Ovary (tissue), 10 donors: ENCODE measurements at regions of chr11 and their contacts with region 1.

Region 1: DNA sequence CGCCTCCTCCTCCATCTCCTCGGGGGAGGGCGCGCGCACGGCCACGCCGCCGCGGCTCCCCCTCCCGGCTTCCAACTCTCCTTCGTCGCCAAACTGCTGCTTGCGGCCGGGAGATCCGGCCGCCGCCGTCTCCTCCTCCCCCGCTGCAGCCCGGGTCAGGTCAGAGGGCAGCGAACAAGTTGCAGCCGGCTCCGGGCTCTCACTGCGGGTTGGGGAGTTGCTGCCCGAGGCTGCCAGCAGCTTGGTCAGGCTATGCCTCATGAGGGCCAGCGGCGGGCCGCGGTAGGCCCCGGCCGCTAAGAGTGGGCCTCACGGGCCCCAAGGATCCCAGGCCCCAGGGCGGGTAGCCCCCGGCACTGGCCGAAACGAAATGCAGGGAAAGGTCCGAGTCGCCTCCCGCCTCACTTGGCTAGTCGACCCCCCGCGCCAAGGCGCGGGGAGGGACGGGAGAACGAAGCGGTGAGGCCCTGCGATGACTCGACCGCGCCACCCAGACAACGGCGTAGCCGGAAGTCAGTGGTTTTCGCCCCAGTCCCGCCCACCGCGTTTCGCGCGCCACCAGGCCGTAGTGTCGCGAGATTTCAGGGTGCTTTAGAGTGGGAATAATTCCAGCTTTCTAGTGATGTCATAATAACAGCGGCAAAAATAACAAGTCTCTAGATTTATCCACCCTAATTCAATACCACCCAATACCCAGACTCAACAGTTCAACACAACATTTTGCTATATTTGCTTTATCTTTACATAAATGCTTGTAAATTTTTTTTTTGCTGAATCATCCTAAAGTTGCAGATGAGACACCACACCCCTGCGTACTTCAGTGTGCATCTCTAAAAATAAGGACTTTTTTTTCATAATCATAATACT is at the start of gene CREBZF:
- DNase-seq: peak; percentile 95 to 97 (median 96)
- H3K4me3 ChIP-seq: peak within 1 kb of the TSS; percentile 68
- H3K27ac ChIP-seq: peak within 1 kb of the TSS; percentile 76 to 98
- H3K4me1 ChIP-seq: peaks cover 2% of the 10 kb centered on the region
- H3K27me3 ChIP-seq: no peaks in the 10 kb centered on the region
- CTCF ChIP-seq: no peak
- EP300 ChIP-seq: no peak
- POLR2A ChIP-seq: peak; percentile 98
- total RNA-seq, gene CREBZF: 44.7 to 80.8 (median 55.7) TPM

Region 2: DNA sequence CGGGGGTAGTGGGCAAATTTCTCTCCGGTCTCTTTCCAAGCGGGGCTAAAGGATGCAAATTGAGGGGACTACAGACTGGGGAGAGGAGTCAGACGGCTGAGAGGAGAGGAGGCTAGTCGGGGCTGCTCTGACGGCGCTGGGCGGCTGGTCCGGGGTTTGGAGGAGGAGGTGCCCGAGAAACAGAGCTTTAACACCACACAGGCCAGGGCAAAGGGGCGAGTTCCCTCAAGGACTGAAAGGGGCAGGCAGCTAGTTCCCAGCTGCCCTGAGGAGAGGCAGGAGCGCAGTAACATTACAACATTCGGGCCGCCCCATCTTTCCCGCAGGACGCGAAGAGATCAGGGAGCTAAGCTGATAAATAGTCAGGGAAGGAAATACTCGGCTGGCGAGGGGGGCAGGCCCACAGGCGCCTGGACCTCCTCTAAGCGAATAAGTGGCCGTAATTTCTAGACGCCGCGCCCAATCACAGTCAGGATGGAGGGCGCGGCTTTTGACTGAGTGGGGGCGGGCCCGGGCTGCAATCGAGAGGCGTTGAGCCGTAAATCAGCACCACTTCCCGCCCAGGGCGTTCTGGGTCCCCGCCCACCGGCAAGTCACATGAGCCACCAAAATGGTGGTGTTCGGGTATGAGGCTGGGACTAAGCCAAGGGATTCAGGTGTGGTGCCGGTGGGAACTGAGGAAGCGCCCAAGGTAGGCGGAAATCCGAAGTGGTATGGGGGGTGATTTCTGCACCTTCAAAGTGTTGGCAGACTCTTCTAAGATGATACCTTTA is 36.7 kb before region 1 on chr11 and contains the start of gene TMEM126B:
- intact Hi-C with region 1: loop called in 1 of 4 experiments (anchors 5 kb)
- DNase-seq: peak; percentile 96 to 98 (median 97)
- H3K4me3 ChIP-seq: peak within 1 kb of the TSS; percentile 85
- H3K27ac ChIP-seq: peak within 1 kb of the TSS; percentile 69 to 94
- H3K4me1 ChIP-seq: no peaks in the 10 kb centered on the region
- H3K27me3 ChIP-seq: no peaks in the 10 kb centered on the region
- CTCF ChIP-seq: no peak
- EP300 ChIP-seq: peak; percentile 91
- POLR2A ChIP-seq: peak; percentile 92
- total RNA-seq, gene TMEM126B: 29.5 to 54.0 (median 42.8) TPM